BJ (cell line): ENCODE measurements at regions of chr1 and their contacts with region 1.

Region 1: GRCh38 chr1:2174348-2175054 is 20.1 kb downstream of the FAAP20 start:
- DNase-seq: peak; percentile 4
- H3K4me3 ChIP-seq: peak overlapping the region; percentile 34
- H3K27me3 ChIP-seq: no peaks in the 10 kb centered on the region
- CTCF ChIP-seq: peak; percentile 98

Region 2: GRCh38 chr1:1959840-1960479 is 214.5 kb before region 1 on chr1:
- CTCF ChIA-PET with region 1: interaction called, 15 read pairs
- POLR2A ChIA-PET with region 1: no interaction called
- DNase-seq: no peak
- H3K4me3 ChIP-seq: no peak overlapping the region
- H3K27me3 ChIP-seq: peaks cover 10% of the 10 kb centered on the region
- CTCF ChIP-seq: peak; percentile 80

Region 3: GRCh38 chr1:2127187-2128145 is 47.0 kb before region 1 on chr1:
- CTCF ChIA-PET with region 1: interaction called, 38 read pairs
- POLR2A ChIA-PET with region 1: no interaction called
- DNase-seq: no peak
- H3K4me3 ChIP-seq: no peak overlapping the region
- H3K27me3 ChIP-seq: no peaks in the 10 kb centered on the region
- CTCF ChIP-seq: no peak

Region 4: GRCh38 chr1:2141036-2141435 is 33.5 kb before region 1 on chr1:
- CTCF ChIA-PET with region 1: interaction called, 31 read pairs
- POLR2A ChIA-PET with region 1: no interaction called
- DNase-seq: no peak
- H3K4me3 ChIP-seq: no peak overlapping the region
- H3K27me3 ChIP-seq: no peaks in the 10 kb centered on the region; the same call in 1 of the 2 replicates
- CTCF ChIP-seq: no peak

Region 5: DNA sequence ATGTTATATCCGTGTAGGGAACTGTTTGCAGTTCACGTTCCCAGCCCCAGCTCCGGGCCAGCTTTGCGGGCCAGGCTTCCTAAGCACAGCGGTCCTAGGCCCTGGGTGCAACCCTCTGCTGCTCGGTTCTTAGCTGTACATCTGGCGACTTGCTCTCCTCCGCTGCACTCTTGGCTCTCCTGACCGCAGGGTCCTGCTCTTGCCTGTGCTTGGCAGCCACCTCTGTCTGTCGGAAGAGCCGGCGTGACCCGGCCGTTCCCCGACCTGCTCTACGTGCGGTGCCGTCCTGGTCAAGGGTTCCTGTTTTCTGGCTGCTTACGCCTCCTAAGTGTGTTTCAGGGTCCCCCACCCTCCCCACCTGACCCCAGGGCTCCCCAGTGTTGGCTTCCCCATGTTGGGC is 16.6 kb before region 1 on chr1:
- CTCF ChIA-PET with region 1: interaction called, 25 read pairs
- POLR2A ChIA-PET with region 1: no interaction called
- DNase-seq: no peak
- H3K4me3 ChIP-seq: no peak overlapping the region
- H3K27me3 ChIP-seq: peaks cover 1% of the 10 kb centered on the region; the same call in 1 of the 2 replicates
- CTCF ChIP-seq: no peak

Region 6: GRCh38 chr1:2189459-2190425 is 15.2 kb after region 1 on chr1:
- CTCF ChIA-PET with region 1: interaction called, 50 read pairs
- POLR2A ChIA-PET with region 1: no interaction called
- DNase-seq: peak; percentile 79
- H3K4me3 ChIP-seq: peak overlapping the region; percentile 41
- H3K27me3 ChIP-seq: no peaks in the 10 kb centered on the region
- CTCF ChIP-seq: no peak

Region 7: DNA sequence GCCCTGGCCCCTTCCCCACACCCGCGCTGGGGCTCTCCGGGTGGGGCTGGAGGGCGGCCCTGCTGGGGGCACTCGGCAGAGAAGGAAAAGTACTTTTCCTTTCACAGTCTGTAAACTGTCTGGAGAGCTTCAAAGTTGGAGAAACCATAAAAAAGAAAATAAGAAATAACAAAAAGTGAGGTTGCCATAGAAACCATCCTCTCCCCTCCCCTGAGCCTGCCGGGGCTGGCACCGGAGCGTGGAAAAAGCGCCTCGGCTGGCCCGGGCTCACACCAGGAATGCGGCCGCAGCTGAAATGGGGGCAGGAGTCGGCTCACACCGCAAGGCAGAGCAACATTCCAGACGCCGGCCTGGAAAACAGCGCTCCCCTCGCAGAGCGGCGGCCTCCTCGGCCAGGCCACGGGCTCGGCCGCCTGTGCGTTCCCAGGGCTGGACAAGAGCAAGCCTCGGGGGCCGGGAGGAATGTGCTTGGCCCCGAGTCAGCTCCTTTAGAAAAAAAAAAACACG is 147.6 kb after region 1 on chr1:
- CTCF ChIA-PET with region 1: no interaction called
- POLR2A ChIA-PET with region 1: no interaction called
- DNase-seq: peak; percentile 76
- H3K4me3 ChIP-seq: no peak overlapping the region; the same call in 1 of the 2 replicates
- H3K27me3 ChIP-seq: peaks cover 3% of the 10 kb centered on the region
- CTCF ChIP-seq: peak; percentile 30; the same call in 1 of the 2 replicates

Region 8: GRCh38 chr1:2415801-2416208 is 241.3 kb after region 1 on chr1:
- CTCF ChIA-PET with region 1: no interaction called
- POLR2A ChIA-PET with region 1: no interaction called
- DNase-seq: no peak
- H3K4me3 ChIP-seq: no peak overlapping the region
- H3K27me3 ChIP-seq: peaks cover 2% of the 10 kb centered on the region; the same call in 1 of the 2 replicates
- CTCF ChIP-seq: no peak

Region 9: DNA sequence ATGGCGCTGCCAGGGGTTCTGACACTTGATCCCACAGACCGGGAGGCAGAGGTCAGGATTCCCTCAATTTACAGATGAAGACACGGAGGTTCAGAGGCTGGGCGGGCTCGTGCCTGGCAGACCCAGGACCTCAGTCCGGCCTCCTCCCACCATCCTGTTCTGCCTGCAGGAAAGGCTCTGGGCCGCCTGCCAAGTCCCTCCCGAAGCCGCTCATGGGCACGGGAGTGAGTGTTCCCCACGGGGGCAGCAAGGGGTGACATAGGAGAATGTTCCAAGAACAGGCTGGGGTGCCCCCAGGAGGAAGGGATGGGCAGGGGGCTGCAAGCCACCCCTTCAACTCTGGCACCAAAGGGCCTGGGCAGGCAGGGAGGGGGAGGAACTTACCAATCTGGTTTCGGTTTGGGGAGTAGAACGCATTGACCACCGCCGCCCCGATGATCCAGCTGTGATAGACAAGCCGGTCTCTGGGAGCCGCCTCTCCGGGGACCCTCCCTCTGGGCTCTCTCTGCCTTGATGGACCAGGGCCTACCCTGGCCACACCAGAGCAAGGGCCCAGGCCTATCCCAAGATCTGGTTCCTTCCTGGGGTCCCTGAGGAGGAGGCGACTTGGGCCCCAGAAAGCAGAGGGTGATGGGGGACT is 419.6 kb after region 1 on chr1:
- CTCF ChIA-PET with region 1: no interaction called
- POLR2A ChIA-PET with region 1: no interaction called
- DNase-seq: no peak
- H3K4me3 ChIP-seq: no peak overlapping the region
- H3K27me3 ChIP-seq: no peaks in the 10 kb centered on the region
- CTCF ChIP-seq: no peak